ENCODE measurements at regions of chr9 and their contacts with region 1.

Region 1: DNA sequence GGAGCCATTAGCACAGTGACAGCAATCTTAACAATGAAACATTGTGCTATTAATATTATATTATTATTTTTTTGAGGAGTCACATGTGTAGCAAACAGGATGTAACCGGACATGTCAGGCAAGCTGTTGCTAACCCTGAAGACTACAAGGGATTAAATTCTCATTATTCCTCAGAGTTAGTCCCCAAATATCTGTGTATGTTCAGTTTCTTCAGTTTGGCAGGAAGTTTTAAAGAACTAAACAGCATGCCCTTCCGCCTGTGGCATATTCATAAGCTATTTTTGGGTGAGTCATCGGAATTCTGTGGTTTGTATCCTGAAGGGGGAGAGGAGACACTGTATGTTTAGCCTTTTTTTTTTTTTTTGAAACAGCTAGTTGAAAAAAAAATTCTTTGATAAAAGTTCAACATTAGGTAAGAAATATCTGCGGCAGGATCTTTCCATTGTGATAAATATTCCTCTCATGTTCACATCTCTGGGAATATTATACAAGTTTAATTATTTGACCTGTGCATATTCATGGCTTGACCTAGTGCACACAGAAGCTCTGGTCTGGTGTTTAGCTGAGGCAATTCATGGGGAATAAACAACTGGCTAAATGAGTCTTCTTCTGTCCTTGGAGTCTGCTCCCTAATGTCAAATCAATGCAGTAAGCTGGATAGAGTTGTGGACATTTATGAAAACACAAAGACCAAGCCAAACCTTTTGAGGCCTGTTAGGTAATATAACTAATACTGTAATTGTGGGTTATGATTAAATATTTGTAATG is 202.7 kb upstream of the CDKN2B start:
- DNase-seq: peak; percentile 71
- H3K4me3 ChIP-seq: no peak overlapping the region
- CTCF ChIP-seq: no peak

Region 2: GRCh38 chr9:22228542-22228941 is 16.8 kb after region 1 on chr9:
- CTCF ChIA-PET with region 1: interaction called, 12 read pairs
- POLR2A ChIA-PET with region 1: no interaction called
- DNase-seq: no peak
- H3K4me3 ChIP-seq: no peak overlapping the region
- CTCF ChIP-seq: peak; percentile 25

Measured in AG04449 (cell line).